ENCODE measurements at regions of chr19 and their contacts with region 1.

Region 1: DNA sequence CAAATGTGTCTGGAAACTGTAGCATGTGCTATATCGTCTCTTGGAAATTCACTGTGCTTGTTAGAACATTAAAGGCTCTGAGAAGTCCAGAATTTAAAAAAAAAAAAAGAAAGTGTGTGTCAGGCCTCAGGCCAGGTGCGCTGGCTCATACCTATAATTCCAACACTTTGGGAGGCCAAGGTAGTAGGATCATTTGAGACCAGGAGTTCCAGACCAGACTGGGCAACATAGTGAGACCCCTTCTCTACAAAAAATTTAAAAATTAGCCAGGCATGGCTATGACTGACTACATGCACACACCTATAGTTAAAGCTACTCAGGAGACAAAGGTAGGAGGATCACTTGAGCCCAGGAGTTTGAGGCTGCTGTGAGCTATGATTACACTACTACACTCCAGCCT is 4.9 kb downstream of the HNRNPUL1 start:
- DNase-seq: no peak
- ATAC-seq: no peak
- H3K4me3 ChIP-seq: no peak overlapping the region
- H3K27ac ChIP-seq: no peak overlapping the region
- H3K4me1 ChIP-seq: peaks cover 20% of the 10 kb centered on the region
- CTCF ChIP-seq: no peak
- EP300 ChIP-seq: no peak
- POLR2A ChIP-seq: no peak
- RAD21 ChIP-seq: no peak

Region 2: GRCh38 chr19:41095703-41096102 is 173.4 kb before region 1 on chr19:
- CTCF ChIA-PET with region 1: no interaction called
- POLR2A ChIA-PET with region 1: no interaction called
- DNase-seq: no peak
- ATAC-seq: no peak; a peak in 1 of 6 replicates
- H3K4me3 ChIP-seq: no peak overlapping the region
- H3K27ac ChIP-seq: no peak overlapping the region
- H3K4me1 ChIP-seq: no peaks in the 10 kb centered on the region
- CTCF ChIP-seq: no peak
- EP300 ChIP-seq: no peak
- POLR2A ChIP-seq: no peak
- RAD21 ChIP-seq: no peak

Region 3: DNA sequence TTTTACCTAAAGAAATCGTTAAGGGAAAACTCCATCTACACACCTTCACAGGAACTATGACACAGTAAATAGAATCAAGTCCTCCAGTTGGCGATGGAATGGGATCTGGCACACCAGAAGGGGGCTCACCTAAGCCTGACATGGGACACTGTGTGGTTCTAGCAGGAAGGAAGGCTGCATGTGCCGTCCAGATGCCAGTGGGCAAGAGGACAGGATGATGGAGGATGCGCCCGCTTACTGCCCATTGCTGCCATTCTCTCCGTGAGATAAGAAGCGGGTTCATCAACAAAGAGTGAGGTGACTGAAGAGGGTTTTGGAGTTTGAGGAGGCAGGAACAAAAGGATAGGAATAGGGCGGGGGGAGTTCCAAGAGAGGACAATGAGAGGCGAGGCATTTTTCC is 157.8 kb before region 1 on chr19:
- CTCF ChIA-PET with region 1: no interaction called
- POLR2A ChIA-PET with region 1: no interaction called
- DNase-seq: no peak
- ATAC-seq: peak; percentile 22 to 33; a peak in 4 of 6 replicates
- H3K4me3 ChIP-seq: no peak overlapping the region
- H3K27ac ChIP-seq: no peak overlapping the region
- H3K4me1 ChIP-seq: no peaks in the 10 kb centered on the region
- CTCF ChIP-seq: no peak
- EP300 ChIP-seq: no peak
- POLR2A ChIP-seq: no peak
- RAD21 ChIP-seq: no peak

Region 4: GRCh38 chr19:41298348-41298964 is 29.4 kb after region 1 on chr19:
- CTCF ChIA-PET with region 1: interaction called, 598 read pairs
- POLR2A ChIA-PET with region 1: interaction called, 3 read pairs
- DNase-seq: no peak
- ATAC-seq: peak; percentile 28 to 54; a peak in 4 of 6 replicates
- H3K4me3 ChIP-seq: no peak overlapping the region
- H3K27ac ChIP-seq: no peak overlapping the region
- H3K4me1 ChIP-seq: no peaks in the 10 kb centered on the region
- CTCF ChIP-seq: no peak
- EP300 ChIP-seq: no peak
- POLR2A ChIP-seq: no peak
- RAD21 ChIP-seq: no peak

Measured in A549 (cell line).